ENCODE measurements at regions of chr3 and their contacts with region 1.

Region 1: GRCh38 chr3:154301571-154301970 is 22.7 kb downstream of the DHX36 start:
- DNase-seq: peak; percentile 15
- H3K4me3 ChIP-seq: no peak overlapping the region
- H3K27ac ChIP-seq: peak overlapping the region in 1 of 2 experiments; percentile 14; a peak in 1 of 4 replicates
- H3K4me1 ChIP-seq: peaks cover 0 to 5% of the 10 kb centered on the region in 2 experiments; a peak in 2 of 4 replicates
- H3K27me3 ChIP-seq: no peaks in the 10 kb centered on the region
- CTCF ChIP-seq: no peak; the same call in 1 of the 2 replicates
- EP300 ChIP-seq: no peak
- RAD21 ChIP-seq: no peak

Region 2: DNA sequence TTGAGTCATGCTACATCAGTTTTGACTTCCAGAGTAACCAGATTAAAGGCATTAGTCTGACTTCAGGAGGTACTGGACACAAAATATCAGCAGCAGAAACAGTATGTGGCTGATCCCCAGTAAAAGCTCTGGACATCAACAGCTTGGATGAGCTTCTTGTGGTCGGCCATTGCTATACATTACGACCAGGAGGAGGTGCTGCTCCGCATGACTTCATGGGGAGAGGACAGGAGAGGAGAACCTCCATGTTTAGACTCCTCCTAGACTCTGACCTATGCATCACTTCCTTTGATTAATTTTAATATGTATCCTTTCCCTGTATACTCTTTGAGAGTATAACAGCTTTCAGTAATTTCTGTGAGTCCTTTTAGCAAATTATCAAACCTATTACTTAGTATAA is 466.0 kb before region 1 on chr3:
- CTCF ChIA-PET with region 1: no interaction called
- POLR2A ChIA-PET with region 1: no interaction called
- DNase-seq: peak; percentile 10
- H3K4me3 ChIP-seq: no peak overlapping the region
- H3K27ac ChIP-seq: no peak overlapping the region
- H3K4me1 ChIP-seq: no peaks in the 10 kb centered on the region
- H3K27me3 ChIP-seq: no peaks in the 10 kb centered on the region
- CTCF ChIP-seq: no peak; the same call in 1 of the 2 replicates
- EP300 ChIP-seq: no peak
- RAD21 ChIP-seq: no peak

Region 3: GRCh38 chr3:154280161-154280560 is 21.4 kb before region 1 on chr3:
- CTCF ChIA-PET with region 1: interaction called, 11 read pairs
- POLR2A ChIA-PET with region 1: no interaction called
- DNase-seq: no peak
- H3K4me3 ChIP-seq: no peak overlapping the region
- H3K27ac ChIP-seq: no peak overlapping the region
- H3K4me1 ChIP-seq: no peaks in the 10 kb centered on the region
- H3K27me3 ChIP-seq: no peaks in the 10 kb centered on the region
- CTCF ChIP-seq: no peak
- EP300 ChIP-seq: no peak
- RAD21 ChIP-seq: no peak

Region 4: DNA sequence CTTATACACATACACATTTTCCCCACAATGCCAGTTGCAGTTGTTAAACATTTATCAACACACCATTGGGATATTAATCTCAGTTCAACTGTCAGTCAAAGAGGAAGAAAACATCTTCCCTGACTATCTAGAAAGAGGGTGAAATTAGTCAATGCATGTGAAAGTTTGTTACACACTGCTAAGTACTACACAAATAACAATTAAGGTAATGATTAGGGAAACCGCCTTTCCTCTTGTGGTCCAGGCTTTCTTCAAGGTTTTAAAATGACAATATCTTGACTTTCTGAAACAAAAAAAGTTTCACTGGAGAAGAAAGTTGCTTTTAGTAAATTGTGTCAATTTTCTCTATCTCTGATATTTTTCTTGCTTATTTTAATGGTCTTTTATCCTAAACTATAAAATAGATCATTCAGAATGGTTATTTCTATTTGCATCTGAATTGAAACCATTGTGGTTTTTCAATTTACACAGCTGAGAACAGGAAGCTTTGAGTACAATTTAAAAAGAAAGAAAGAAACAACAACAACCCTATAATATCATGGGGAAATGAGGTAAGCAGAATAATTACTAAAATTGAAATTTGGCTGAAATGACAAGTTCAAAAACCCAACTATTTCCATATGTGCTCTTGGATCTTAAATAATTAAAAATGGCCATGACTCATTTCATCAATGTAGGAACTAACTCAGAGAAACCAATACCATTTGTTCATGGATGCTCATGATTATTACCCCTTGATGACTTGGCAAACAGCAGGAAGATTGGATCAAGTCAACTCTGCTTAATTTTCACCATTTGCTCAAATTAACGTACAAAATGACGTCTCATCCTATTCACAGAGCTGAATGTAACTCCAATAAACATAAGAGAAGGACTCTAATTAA is 96.8 kb after region 1 on chr3:
- CTCF ChIA-PET with region 1: no interaction called
- POLR2A ChIA-PET with region 1: no interaction called
- DNase-seq: no peak
- H3K4me3 ChIP-seq: no peak overlapping the region
- H3K27ac ChIP-seq: no peak overlapping the region
- H3K4me1 ChIP-seq: no peaks in the 10 kb centered on the region
- H3K27me3 ChIP-seq: no peaks in the 10 kb centered on the region
- CTCF ChIP-seq: no peak
- EP300 ChIP-seq: no peak
- RAD21 ChIP-seq: no peak

Region 5: DNA sequence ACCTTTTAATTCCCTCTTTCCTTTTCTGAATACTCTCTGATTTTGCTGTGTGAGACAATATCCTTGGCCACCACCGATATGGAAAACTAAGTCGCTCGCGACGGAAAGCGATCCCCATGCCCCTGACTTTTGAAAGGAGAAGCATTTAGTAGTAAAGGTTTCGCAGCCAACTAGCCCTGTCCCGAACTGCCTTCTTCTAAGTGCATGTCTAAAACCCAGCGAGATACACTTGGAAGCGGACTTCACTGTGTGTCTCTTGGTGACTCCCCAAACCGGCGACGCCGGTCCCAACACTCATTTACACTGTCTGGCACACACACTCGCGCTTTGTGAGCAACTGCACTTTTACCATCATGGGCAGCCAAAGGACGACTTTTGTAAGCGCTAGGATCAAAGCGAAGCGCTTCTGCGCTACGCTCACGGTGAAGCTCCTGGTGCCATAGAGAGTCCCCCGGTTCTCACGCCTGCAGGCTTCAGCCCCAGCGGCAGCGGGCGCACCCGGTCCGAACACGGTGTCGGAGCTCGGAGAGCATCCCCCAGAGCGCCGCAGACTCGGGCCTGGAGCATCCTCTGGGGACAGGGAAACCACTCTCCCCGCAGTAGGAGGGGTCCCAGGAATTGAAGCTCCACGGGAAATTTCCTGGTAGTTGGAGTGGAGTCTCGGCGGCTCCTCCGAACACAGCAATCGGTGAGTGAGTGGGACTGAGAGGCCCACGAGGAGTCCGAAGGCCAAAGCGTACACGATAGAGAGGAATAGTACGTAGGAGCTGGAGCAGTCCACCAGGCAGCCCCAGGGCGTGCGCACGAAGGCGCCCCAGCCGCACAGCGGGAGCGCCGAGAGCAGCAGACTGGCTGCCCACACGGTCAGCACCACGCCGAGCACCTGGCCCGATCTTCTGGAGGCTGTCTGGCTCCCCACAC is 127.0 kb after region 1 on chr3:
- CTCF ChIA-PET with region 1: no interaction called
- POLR2A ChIA-PET with region 1: no interaction called
- DNase-seq: peak; percentile 42
- H3K4me3 ChIP-seq: peak overlapping the region; percentile 22 to 23
- H3K27ac ChIP-seq: no peak overlapping the region
- H3K4me1 ChIP-seq: no peaks in the 10 kb centered on the region; a peak in 1 of 4 replicates
- H3K27me3 ChIP-seq: peaks cover 22% of the 10 kb centered on the region
- CTCF ChIP-seq: no peak
- EP300 ChIP-seq: no peak
- RAD21 ChIP-seq: no peak

Region 6: GRCh38 chr3:154486949-154487348 is 185.4 kb after region 1 on chr3:
- CTCF ChIA-PET with region 1: no interaction called
- POLR2A ChIA-PET with region 1: no interaction called
- DNase-seq: no peak
- H3K4me3 ChIP-seq: no peak overlapping the region
- H3K27ac ChIP-seq: no peak overlapping the region
- H3K4me1 ChIP-seq: no peaks in the 10 kb centered on the region
- H3K27me3 ChIP-seq: no peaks in the 10 kb centered on the region
- CTCF ChIP-seq: no peak
- EP300 ChIP-seq: no peak
- RAD21 ChIP-seq: no peak

Measured in SK-N-SH (cell line).